Uterus (tissue), 4 donors: ENCODE measurements at regions of chr18 and their contacts with region 1.

Region 1: GRCh38 chr18:9102508-9103375 is at the start of gene NDUFV2:
- DNase-seq: peak; percentile 95 to 98
- H3K4me3 ChIP-seq: peak within 1 kb of the TSS; percentile 69 to 82
- H3K27ac ChIP-seq: peak within 1 kb of the TSS; percentile 93 to 94
- H3K4me1 ChIP-seq: peaks cover 0 to 8% of the 10 kb centered on the region in 2 donors
- H3K27me3 ChIP-seq: no peaks in the 10 kb centered on the region
- CTCF ChIP-seq: peak; percentile 1 to 19 (median 3)
- POLR2A ChIP-seq: peak; percentile 89 to 92
- total RNA-seq, gene NDUFV2: 54.8 to 99.8 (median 95.8) TPM

Region 2: GRCh38 chr18:8704361-8705279 is 398.1 kb before region 1 on chr18:
- intact Hi-C with region 1: no loop called
- DNase-seq: peak; percentile 83 to 86
- H3K4me3 ChIP-seq: peak overlapping the region; percentile 55 to 87
- H3K27ac ChIP-seq: peak overlapping the region; percentile 77 to 88
- H3K4me1 ChIP-seq: peaks cover 0 to 4% of the 10 kb centered on the region in 2 donors
- H3K27me3 ChIP-seq: no peaks in the 10 kb centered on the region
- CTCF ChIP-seq: no peak
- POLR2A ChIP-seq: peak; percentile 36 to 61

Region 3: GRCh38 chr18:9136315-9137155 is 33.8 kb after region 1 on chr18 and contains the start of gene ANKRD12:
- intact Hi-C with region 1: loop called (anchors 5 kb)
- DNase-seq: peak; percentile 94 to 97
- H3K4me3 ChIP-seq: peak within 1 kb of the TSS; percentile 81 to 82
- H3K27ac ChIP-seq: peak within 1 kb of the TSS; percentile 98 to 100
- H3K4me1 ChIP-seq: peaks cover 13 to 14% of the 10 kb centered on the region in 2 donors
- H3K27me3 ChIP-seq: no peaks in the 10 kb centered on the region
- CTCF ChIP-seq: no peak
- POLR2A ChIP-seq: peak; percentile 71 to 91
- total RNA-seq, gene ANKRD12: 29.1 to 122 (median 43.6) TPM